A549 (cell line): ENCODE measurements at regions of chr10 and their contacts with region 1.

Region 1: GRCh38 chr10:27742195-27743011 is 3.2 kb downstream of the MKX start:
- DNase-seq: peak; percentile 38 to 70
- ATAC-seq: peak; percentile 76 to 84
- H3K4me3 ChIP-seq: peak overlapping the region; percentile 64
- H3K27ac ChIP-seq: peak overlapping the region; percentile 68 to 84; a peak in 5 of 6 replicates
- H3K4me1 ChIP-seq: peaks cover 33% of the 10 kb centered on the region
- CTCF ChIP-seq: peak; percentile 68
- EP300 ChIP-seq: no peak
- POLR2A ChIP-seq: no peak
- RAD21 ChIP-seq: peak; percentile 52 to 70; a peak in 4 of 5 replicates

Region 2: DNA sequence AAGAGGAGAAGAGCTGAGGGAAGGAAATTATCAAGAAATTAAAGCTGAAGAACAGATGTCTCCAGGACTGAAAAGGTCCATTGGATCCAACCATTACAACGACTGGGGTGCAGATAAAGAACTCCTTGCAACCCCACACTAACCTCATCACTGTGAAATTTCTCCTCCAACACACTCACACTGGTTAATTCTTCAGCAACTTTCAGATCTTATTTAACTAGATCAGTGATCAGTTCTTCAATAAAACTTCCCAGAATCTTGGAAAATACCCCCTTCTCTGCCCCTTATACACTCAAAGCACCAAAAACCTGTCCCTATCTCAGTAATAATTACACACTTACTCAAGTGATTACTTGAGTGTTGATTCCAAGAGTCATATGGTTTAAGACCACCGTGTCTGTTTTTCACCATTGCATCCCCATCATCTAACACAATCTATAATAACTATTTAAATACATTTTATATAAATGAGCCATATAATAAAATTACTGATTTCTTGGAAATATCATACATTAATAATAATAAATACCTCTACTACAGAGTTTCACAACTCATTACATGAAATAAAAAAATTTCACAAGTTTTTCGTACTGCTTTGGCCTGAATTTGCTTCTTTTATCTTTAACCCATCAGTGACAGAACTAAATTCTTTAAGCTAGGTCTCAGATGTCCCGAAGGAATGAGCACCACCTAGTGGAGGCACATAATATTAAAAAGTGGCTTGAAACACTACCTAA is 436.8 kb after region 1 on chr10:
- CTCF ChIA-PET with region 1: interaction called, 13 read pairs
- POLR2A ChIA-PET with region 1: no interaction called
- DNase-seq: peak; percentile 20 to 52
- ATAC-seq: peak; percentile 66 to 75; a peak in 4 of 6 replicates
- H3K4me3 ChIP-seq: no peak overlapping the region
- H3K27ac ChIP-seq: no peak overlapping the region
- H3K4me1 ChIP-seq: no peaks in the 10 kb centered on the region
- CTCF ChIP-seq: peak; percentile 86
- EP300 ChIP-seq: no peak
- POLR2A ChIP-seq: no peak
- RAD21 ChIP-seq: peak; percentile 81 to 82